ENCODE measurements at regions of chr5 and their contacts with region 1.

Region 1: DNA sequence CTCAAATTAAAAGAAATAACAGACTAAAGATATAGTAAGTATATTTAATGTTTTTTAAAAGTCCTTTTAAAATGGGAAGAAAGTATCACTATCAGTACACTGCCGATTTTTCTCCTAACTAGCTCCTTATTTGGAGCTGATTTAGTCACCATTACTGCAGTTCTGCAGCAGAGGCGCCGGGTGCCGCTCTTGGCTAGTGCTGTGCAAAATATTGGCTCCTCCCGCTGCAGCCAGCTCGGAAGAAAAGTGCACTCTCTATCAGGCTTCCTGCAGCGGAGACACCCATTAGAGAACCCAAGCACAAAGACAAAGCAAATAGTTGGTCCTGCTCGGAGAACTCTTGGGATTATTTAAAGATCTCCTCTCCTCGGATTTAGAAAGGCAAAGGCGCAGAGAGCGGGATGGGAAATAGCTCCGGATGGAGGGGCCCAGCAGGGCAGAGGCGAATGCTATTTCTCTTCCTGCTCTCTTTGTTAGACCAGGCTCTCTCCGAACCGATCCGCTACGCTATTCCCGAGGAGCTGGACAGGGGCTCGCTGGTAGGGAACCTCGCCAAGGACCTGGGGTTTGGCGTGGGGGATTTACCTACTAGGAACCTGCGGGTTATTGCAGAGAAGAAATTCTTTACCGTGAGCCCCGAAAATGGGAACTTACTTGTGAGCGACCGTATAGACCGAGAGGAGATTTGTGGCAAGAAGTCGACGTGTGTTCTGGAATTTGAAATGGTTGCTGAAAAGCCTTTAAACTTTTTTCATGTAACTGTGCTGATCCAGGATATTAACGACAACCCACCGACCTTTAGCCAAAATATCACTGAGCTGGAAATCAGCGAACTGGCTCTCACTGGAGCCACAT is at the start of gene PCDHGB3:
- DNase-seq: no peak
- H3K4me3 ChIP-seq: peak within 1 kb of the TSS; percentile 45
- CTCF ChIP-seq: peak; percentile 40

Region 2: GRCh38 chr5:141320225-141321169 is 49.7 kb before region 1 on chr5 and contains the start of gene TAF7:
- CTCF ChIA-PET with region 1: interaction called, 15 read pairs
- POLR2A ChIA-PET with region 1: no interaction called
- DNase-seq: peak; percentile 63
- H3K4me3 ChIP-seq: peak within 1 kb of the TSS; percentile 85
- CTCF ChIP-seq: peak; percentile 82

Region 3: DNA sequence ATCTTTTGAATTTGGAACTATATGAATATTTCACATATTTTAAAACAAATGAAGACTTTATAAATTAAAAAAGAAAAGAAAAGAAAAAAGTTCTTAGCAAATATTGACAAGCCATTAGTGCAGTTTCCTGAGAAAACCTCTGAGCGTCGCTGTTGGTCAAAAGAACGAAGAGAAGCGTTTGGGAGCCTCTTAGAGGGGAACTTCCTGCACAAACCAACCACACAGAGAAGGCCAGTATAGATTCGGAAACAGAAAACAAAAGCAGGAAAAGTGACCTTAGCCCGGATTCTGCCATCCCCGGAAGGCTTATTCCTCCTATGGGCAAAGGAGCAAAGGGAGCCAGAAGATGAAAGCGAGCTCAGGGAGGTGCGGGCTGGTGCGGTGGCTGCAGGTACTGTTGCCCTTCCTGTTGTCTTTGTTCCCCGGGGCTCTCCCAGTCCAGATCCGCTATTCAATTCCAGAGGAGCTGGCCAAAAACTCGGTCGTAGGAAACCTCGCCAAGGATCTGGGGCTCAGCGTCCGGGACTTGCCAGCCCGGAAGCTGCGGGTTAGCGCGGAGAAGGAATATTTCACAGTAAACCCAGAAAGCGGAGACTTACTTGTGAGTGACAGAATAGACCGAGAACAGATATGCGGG is 10.3 kb before region 1 on chr5 and contains the start of gene PCDHGB2:
- CTCF ChIA-PET with region 1: interaction called, 20 read pairs
- POLR2A ChIA-PET with region 1: no interaction called
- DNase-seq: no peak
- H3K4me3 ChIP-seq: peak within 1 kb of the TSS; percentile 53
- CTCF ChIP-seq: peak; percentile 15

Region 4: GRCh38 chr5:141392429-141393198 is 22.4 kb after region 1 on chr5 and contains the start of gene PCDHGA8:
- CTCF ChIA-PET with region 1: interaction called, 16 read pairs
- POLR2A ChIA-PET with region 1: no interaction called
- DNase-seq: no peak
- H3K4me3 ChIP-seq: 0 out of 2 replicates have a peak within 1 kb of the TSS, but pooled peaks have one; percentile 1
- CTCF ChIP-seq: no peak

Region 5: DNA sequence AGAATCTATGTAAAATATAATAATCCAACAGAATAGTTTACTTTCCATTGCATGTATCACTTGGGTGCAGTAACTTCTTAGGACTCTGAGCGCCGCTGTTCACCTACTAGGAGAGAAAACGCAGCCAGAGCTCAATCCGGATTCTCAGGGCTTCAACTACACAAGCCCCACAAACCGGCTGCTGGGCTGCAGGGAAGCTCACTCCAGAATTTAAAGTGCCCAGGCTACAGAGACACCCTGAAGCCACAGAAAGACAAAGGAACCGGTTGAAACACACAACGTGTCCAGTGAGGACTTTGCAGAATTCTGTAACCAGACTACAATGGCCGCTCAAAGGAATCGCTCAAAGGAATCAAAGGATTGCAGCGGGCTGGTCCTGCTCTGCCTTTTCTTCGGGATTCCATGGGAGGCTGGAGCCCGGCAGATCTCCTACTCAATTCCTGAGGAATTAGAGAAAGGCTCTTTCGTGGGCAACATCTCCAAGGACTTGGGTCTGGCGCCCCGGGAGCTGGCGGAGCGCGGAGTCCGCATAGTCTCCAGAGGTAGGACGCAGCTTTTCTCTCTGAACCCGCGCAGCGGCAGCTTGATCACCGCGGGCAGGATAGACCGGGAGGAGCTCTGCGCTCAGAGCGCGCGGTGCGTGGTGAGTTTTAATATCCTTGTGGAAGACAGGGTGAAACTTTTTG is 42.8 kb after region 1 on chr5 and contains the start of gene PCDHGA10:
- CTCF ChIA-PET with region 1: interaction called, 14 read pairs
- POLR2A ChIA-PET with region 1: no interaction called
- DNase-seq: no peak
- H3K4me3 ChIP-seq: peak within 1 kb of the TSS; percentile 53
- CTCF ChIP-seq: peak; percentile 48

Region 6: GRCh38 chr5:142215915-142216681 is 845.9 kb after region 1 on chr5:
- CTCF ChIA-PET with region 1: no interaction called
- POLR2A ChIA-PET with region 1: no interaction called
- DNase-seq: peak; percentile 94
- H3K4me3 ChIP-seq: no peak overlapping the region
- CTCF ChIP-seq: no peak